ENCODE measurements at regions of chr20 and their contacts with region 1.

Region 1: DNA sequence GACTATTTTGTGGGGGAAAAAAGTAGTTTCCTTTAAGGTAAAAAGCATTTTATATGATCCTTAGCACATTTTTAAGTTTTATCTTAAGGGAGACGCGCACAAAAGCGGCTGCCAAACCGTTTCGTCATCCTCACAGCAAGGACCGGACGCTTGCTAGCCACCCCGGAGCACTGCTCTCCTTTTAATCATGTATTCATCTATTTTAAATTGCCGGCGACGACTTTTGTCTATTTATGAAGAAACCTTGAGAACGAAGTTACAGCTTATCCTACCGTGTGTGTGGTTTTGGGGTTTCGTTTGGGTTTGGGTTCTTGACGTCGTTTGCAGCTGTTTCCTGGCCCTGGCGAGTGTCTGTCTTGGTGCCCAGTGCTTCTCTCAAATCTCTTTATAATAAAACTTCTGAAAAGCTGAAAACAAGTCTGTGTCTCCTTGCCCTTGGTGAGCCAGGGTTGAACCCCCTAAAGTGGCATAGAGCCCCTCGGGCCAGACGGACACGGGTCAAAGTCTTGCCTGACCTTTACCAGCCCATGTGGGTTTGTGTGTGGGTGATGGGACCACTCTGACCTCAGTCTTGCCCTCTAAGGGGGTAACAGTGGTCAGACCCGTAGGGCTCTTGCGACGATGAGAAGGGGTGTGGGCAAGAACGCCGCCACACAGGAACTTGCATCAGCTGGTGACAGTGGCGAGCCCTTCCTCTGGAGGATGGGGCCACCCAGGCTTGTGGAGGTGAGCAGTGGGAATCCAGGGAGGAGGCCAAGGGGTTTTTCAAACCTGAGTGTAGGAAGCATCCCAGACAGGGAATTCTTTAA is 117.6 kb downstream of the JPH2 start:
- DNase-seq: peak; percentile 79
- H3K4me3 Mint-ChIP-seq: peak overlapping the region; percentile 61
- H3K27ac Mint-ChIP-seq: peak overlapping the region; percentile 90
- H3K4me1 Mint-ChIP-seq: peaks cover 44% of the 10 kb centered on the region
- H3K27me3 Mint-ChIP-seq: peaks cover 45% of the 10 kb centered on the region

Region 2: GRCh38 chr20:44018259-44018941 is 51.0 kb before region 1 on chr20:
- CTCF ChIA-PET with region 1: no interaction called
- POLR2A ChIA-PET with region 1: interaction called, 13 read pairs
- DNase-seq: no peak
- H3K4me3 Mint-ChIP-seq: no peak overlapping the region
- H3K27ac Mint-ChIP-seq: no peak overlapping the region
- H3K4me1 Mint-ChIP-seq: peaks cover 25% of the 10 kb centered on the region
- H3K27me3 Mint-ChIP-seq: peaks cover 84% of the 10 kb centered on the region

Region 3: GRCh38 chr20:44028868-44029847 is 40.2 kb before region 1 on chr20:
- CTCF ChIA-PET with region 1: interaction called, 5 read pairs
- POLR2A ChIA-PET with region 1: interaction called, 10 read pairs
- DNase-seq: peak; percentile 65
- H3K4me3 Mint-ChIP-seq: peak overlapping the region; percentile 35
- H3K27ac Mint-ChIP-seq: peak overlapping the region; percentile 73
- H3K4me1 Mint-ChIP-seq: peaks cover 57% of the 10 kb centered on the region
- H3K27me3 Mint-ChIP-seq: peaks cover 83% of the 10 kb centered on the region

Measured in activated CD4-positive, alpha-beta memory T cell treated with anti-CD3 and anti-CD28 coated beads, Interleukin-2, amount 10 ng/mL, durations not matched to agents 7 days and 5 days (primary cell).